A549 (cell line): ENCODE measurements at regions of chr10 and their contacts with region 1.

Region 1: DNA sequence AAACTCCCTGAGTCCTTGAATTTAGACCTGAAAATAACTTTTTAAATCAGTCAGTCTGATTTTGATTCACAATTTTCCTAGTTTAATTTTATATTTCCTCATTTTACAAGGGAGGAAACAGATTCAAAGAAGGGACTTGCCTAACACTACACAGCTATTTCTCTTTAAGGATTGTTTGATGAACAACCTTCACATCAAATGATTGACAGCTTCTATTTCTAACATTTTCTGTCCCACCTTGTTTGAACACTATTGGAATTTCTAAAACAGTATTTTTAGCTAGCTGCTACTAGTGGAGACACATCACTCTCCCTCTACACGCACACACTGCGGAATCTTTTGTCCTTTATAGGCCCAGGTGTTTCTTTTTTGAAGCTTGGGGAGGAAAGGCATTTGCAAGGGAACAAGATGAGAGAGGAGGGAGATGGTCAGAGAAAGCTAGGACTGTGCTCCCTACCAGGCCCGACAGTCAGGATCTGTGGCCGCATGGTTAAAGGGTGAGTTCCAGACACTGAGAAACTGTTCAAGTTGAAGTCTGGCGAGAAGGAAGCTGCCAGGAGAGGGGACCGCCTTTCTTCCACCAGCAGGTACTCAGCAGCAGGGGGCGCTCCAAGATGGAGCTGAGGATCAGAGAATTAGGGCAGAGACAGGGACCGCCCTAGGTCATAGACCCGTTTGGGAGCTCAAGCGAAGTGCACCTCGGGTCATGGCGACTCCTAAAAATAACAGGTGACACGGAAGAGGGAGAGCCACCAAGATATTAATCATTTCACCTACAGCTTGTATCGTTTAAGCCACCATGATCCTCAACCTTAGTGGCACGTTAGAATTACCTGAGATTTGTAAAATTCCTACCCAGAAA is 49.7 kb downstream of the DNAJC12 start:
- DNase-seq: peak; percentile 77
- ATAC-seq: peak; percentile 91 to 95
- H3K4me3 ChIP-seq: no peak overlapping the region
- H3K27ac ChIP-seq: peak overlapping the region; percentile 57 to 69
- H3K4me1 ChIP-seq: peaks cover 32% of the 10 kb centered on the region
- CTCF ChIP-seq: peak; percentile 81
- EP300 ChIP-seq: no peak
- POLR2A ChIP-seq: no peak
- RAD21 ChIP-seq: peak; percentile 86 to 93

Region 2: DNA sequence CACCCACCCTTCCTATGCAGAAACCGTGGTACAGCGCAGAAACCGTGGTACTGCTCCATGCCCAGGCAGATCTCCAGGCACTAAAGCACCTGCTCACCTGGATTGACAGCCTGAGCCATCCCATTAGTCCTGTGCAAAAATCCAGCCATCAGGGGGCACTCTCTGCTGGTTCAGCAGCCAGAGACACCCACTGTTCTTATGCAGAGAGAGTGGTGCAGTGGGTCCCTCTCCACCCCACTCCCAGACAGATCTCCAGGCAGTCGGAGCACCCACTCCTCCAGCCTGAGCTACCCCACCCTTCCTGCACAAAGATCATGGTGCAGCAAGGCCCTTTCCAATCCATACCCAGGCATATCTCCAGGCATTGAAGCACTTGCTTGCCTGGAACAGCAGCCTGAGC is 312.1 kb before region 1 on chr10:
- CTCF ChIA-PET with region 1: no interaction called
- POLR2A ChIA-PET with region 1: no interaction called
- DNase-seq: no peak
- ATAC-seq: 0 out of 6 replicates have a peak, but pooled peaks of 1 of the 2 experiments have one; percentile 34
- H3K4me3 ChIP-seq: no peak overlapping the region
- H3K27ac ChIP-seq: no peak overlapping the region
- H3K4me1 ChIP-seq: no peaks in the 10 kb centered on the region
- CTCF ChIP-seq: no peak
- EP300 ChIP-seq: no peak
- POLR2A ChIP-seq: no peak
- RAD21 ChIP-seq: peak in 1 of 2 experiments; percentile 19; a peak in 1 of 5 replicates

Region 3: GRCh38 chr10:67697724-67698131 is 90.5 kb before region 1 on chr10:
- CTCF ChIA-PET with region 1: interaction called, 19 read pairs
- POLR2A ChIA-PET with region 1: no interaction called
- DNase-seq: peak; percentile 58 to 63
- ATAC-seq: peak; percentile 89 to 91; a peak in 5 of 6 replicates
- H3K4me3 ChIP-seq: no peak overlapping the region
- H3K27ac ChIP-seq: no peak overlapping the region
- H3K4me1 ChIP-seq: no peaks in the 10 kb centered on the region
- CTCF ChIP-seq: peak; percentile 72
- EP300 ChIP-seq: no peak
- POLR2A ChIP-seq: no peak
- RAD21 ChIP-seq: peak; percentile 63 to 65

Region 4: DNA sequence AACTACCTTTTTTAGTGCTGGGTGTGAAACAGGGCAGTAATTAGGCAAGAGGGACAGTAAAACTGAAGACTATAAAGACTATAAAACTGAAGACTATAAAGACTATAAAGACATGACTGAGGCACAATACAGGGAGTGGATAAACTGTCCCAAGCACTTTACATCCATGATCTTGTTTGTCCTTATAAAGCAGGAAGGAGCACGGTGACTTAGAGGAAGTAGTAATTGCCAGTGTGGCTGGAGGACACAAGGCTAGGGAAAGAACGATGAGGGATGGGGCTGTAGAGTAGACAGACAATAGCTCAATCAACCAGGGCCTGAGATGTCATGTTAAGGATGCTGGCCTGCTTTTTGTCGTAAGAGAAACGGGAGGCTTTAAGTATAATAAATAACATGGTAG is 23.8 kb after region 1 on chr10:
- CTCF ChIA-PET with region 1: interaction called, 21 read pairs
- POLR2A ChIA-PET with region 1: no interaction called
- DNase-seq: no peak
- ATAC-seq: no peak
- H3K4me3 ChIP-seq: no peak overlapping the region
- H3K27ac ChIP-seq: peak overlapping the region; percentile 33 to 55; a peak in 5 of 6 replicates
- H3K4me1 ChIP-seq: peaks cover 27% of the 10 kb centered on the region
- CTCF ChIP-seq: no peak
- EP300 ChIP-seq: no peak
- POLR2A ChIP-seq: no peak
- RAD21 ChIP-seq: no peak

Region 5: DNA sequence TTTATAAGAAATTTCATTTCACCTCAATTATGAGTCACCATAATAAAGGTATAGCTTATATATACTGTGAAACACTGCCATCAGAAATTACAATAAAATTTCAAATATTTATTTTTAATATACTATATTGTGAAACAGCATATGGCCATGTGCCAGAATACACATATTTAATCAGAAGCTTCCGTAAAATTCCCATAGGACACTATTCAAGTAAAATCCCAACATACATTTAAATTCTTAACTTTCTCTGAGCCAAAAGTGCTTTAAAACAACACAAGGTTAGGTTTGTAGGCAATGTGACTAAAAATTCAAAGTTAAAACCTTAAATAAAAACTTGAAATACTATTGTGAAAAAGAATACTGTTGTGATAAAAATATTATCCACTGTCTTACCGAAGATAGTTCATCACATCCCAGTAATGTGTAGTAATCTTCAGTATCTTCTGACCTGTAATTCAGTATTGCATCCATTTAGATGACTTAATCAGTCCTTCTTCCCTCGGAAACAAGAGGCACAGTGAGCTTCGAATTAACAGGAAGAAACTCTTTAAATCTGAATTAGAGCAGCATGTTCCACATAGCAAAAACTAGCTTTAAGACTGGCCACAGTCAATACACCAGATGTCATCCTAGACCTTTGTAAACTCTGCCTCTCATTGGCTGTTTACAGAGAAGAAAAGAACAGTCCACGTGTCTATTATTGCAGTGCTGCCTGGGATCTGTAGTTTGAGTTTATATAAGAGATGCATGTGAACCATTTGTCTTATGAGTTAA is 49.5 kb after region 1 on chr10 and contains the start of gene DNAJC12:
- CTCF ChIA-PET with region 1: interaction called, 11 read pairs
- POLR2A ChIA-PET with region 1: interaction called, 6 read pairs
- DNase-seq: peak; percentile 56 to 86
- ATAC-seq: peak; percentile 96 to 99
- H3K4me3 ChIP-seq: peak within 1 kb of the TSS; percentile 55
- H3K27ac ChIP-seq: peak within 1 kb of the TSS; percentile 63
- H3K4me1 ChIP-seq: peaks cover 12% of the 10 kb centered on the region; the same call in 1 of the 3 replicates
- CTCF ChIP-seq: no peak
- EP300 ChIP-seq: no peak
- POLR2A ChIP-seq: no peak
- RAD21 ChIP-seq: 0 out of 5 replicates have a peak, but pooled peaks have one; percentile 2 to 17
- polyA plus RNA-seq, gene DNAJC12: 80.0 and 87.9 TPM in 2 replicates

Region 6: DNA sequence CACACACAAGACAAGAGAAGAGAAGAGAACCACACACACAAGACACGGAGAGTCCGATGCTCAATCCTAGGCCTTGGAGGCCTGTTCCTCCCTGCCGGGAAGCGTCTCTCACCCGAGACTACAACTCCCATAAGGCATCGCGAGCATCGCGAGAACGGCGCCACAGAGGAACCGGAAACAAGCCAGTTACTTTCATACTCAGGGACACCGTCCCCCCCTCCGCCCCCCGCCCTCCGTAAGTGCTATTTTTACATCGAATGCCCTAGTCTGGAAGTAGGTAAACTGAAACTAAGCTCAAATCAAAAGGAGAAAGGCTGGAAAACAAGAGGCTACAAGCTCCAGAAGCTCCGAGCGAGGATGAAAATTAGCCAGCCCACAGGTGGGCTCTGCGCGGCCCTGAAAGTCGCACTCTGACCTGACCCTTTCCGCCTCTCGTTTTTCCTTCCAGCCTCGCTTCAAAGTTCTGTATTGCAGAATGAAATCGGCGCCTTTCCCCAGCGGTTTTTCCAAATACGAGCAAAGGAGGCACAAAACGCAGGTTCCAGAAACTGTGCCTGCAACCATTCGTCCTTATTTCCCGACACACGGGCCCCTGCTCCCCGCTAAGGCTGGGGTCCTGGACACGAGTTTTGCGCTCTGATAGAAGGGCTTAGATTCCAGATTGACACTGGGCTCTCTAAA is 61.2 kb after region 1 on chr10:
- CTCF ChIA-PET with region 1: interaction called, 16 read pairs
- POLR2A ChIA-PET with region 1: interaction called, 6 read pairs
- DNase-seq: peak; percentile 90 to 96
- ATAC-seq: peak; percentile 99 to 100
- H3K4me3 ChIP-seq: peak overlapping the region; percentile 59
- H3K27ac ChIP-seq: peak overlapping the region; percentile 89 to 90
- H3K4me1 ChIP-seq: peaks cover 5% of the 10 kb centered on the region; the same call in 1 of the 3 replicates
- CTCF ChIP-seq: no peak
- EP300 ChIP-seq: no peak
- POLR2A ChIP-seq: peak; percentile 58
- RAD21 ChIP-seq: no peak

Region 7: DNA sequence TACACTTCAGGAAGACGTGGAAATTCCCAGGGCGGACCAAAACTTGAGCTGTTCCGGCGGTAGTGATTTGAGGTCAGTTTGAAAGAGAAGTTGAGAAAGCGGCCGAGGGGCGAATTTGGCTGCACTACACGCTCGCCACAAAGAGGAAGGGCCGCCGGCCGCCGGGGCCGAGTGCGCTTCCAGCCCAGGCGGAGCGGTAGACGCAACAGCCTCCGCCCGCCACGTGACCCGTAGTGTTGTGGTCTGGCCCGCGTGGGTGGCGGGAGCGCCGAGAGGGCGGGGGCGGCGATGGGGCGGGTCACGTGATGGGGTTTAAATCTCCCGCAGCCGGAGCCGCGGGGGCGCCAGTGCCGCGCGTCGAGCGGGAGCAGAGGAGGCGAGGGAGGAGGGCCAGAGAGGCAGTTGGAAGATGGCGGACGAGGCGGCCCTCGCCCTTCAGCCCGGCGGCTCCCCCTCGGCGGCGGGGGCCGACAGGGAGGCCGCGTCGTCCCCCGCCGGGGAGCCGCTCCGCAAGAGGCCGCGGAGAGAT is 96.1 kb after region 1 on chr10 and contains the start of gene SIRT1:
- CTCF ChIA-PET with region 1: interaction called, 15 read pairs
- POLR2A ChIA-PET with region 1: interaction called, 6 read pairs
- DNase-seq: peak; percentile 91 to 96
- ATAC-seq: peak; percentile 91 to 92
- H3K4me3 ChIP-seq: peak within 1 kb of the TSS; percentile 69
- H3K27ac ChIP-seq: peak within 1 kb of the TSS; percentile 94 to 95
- H3K4me1 ChIP-seq: peaks cover 11% of the 10 kb centered on the region
- CTCF ChIP-seq: peak; percentile 38
- EP300 ChIP-seq: no peak
- POLR2A ChIP-seq: peak; percentile 97
- RAD21 ChIP-seq: no peak; a peak in 2 of 5 replicates
- polyA plus RNA-seq, gene SIRT1: 30.5 and 34.8 TPM in 2 replicates